Activated CD4-positive, alpha-beta T cell treated with anti-CD3 and anti-CD28 coated beads for 36 hours (primary cell): ENCODE measurements at regions of chr15 and their contacts with region 1.

Region 1: DNA sequence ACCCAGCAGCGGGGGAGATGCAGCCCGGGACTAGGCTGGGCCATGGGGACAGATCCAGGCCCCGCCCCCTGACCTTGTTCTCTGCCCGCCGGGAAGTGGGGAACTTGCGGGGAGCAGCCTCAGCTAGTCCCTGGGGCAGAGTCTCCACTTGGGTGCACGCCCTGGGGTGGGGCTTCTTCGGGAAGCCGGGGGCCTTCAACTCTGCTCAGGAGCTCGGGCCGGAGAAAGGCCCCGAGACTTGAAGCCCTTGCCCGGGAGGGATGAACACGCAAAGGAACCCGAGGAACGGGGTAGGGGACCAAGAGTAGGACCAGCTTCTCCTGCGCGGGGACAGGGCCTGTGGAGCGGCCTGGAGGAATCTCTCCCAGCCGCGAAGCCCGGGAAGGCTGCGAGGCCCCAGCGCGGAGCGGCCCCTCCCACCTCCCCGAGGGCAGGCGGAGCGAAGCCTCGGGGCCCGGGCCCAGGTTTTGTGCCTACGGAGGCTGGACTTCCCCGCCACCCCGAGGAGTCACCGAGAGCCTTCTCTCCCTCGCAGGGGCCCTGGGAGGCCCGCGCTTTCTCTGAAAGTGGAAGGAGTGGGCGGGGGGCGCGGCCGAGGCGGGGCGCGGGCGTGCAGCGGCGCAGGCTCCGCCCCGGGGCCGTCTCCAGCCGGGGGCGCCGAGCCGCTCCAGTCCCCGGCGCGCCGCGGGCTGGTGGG is at the start of gene ITPKA:
- DNase-seq: peak; percentile 97
- ATAC-seq: peak; percentile 85
- H3K4me3 Mint-ChIP-seq: peak within 1 kb of the TSS; percentile 58
- H3K27ac Mint-ChIP-seq: peak within 1 kb of the TSS; percentile 37
- H3K4me1 Mint-ChIP-seq: peaks cover 38% of the 10 kb centered on the region
- H3K27me3 Mint-ChIP-seq: peaks cover 40% of the 10 kb centered on the region
- total RNA-seq, gene ITPKA: 2.5 to 4.2 TPM

Region 2: DNA sequence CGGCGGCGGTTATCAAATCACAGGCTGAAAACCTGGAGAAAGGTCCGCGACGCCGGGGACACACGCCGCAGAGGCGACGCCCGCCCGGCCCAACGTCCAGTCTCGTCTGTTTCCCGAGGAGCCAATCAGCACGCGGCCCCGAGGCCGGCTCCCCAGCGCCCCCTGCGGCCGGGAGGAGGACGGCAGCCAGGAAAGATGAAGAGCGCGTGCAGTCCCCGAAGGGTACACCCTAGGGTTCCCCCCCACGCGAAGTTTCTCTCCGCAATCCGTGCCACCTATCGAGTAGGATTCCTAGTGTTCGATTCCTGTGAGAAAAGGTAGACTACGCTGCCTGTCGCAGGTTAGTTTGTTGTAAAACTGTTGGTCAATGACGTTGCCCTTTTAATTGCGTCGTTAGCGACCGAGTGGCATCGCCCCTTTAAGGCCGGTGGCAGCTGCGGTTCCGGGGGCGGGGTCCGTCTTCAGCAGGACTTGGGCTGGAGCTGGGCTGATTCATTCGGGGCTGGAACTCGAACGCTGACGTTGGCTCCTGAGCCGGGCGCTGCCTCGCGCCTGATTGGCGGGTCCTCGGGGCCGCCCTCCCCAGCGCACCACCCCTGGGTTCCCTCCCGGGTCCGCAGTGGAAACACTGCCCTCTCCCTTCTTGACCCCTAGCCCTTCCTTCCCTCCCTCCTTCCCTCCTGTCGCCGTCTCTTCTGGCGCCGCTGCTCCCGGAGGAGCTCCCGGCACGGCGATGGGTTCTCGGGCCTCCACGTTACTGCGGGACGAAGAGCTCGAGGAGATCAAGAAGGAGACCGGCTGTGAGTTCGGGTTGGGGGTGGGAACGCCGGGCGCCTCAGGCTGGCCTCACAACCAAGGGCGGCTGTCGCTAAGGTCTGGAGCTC is 262.5 kb before region 1 on chr15 and contains the starts of genes CHP1 and EXD1:
- CTCF ChIA-PET with region 1: no interaction called
- POLR2A ChIA-PET with region 1: no interaction called
- intact Hi-C with region 1: loop called in 1 of 2 experiments (anchors 1 kb)
- DNase-seq: peak; percentile 99
- ATAC-seq: peak; percentile 99
- H3K4me3 Mint-ChIP-seq: peak within 1 kb of the TSS; percentile 87
- H3K27ac Mint-ChIP-seq: peak within 1 kb of the TSS; percentile 86
- H3K4me1 Mint-ChIP-seq: peaks cover 29% of the 10 kb centered on the region
- H3K27me3 Mint-ChIP-seq: no peaks in the 10 kb centered on the region
- total RNA-seq, gene CHP1: 32.7 to 34.5 TPM
- total RNA-seq, gene EXD1: not detected

Region 3: GRCh38 chr15:41416742-41417406 is 76.5 kb before region 1 on chr15 and contains the start of gene RTF1:
- CTCF ChIA-PET with region 1: no interaction called
- POLR2A ChIA-PET with region 1: no interaction called
- intact Hi-C with region 1: loop called in 1 of 2 experiments (anchors 1 kb)
- DNase-seq: peak; percentile 98
- ATAC-seq: peak; percentile 94
- H3K4me3 Mint-ChIP-seq: peak within 1 kb of the TSS; percentile 88
- H3K27ac Mint-ChIP-seq: peak within 1 kb of the TSS; percentile 92
- H3K4me1 Mint-ChIP-seq: peaks cover 38% of the 10 kb centered on the region
- H3K27me3 Mint-ChIP-seq: no peaks in the 10 kb centered on the region
- total RNA-seq, gene RTF1: 29.4 to 32.3 TPM

Region 4: GRCh38 chr15:41557673-41558399 is 64.5 kb after region 1 on chr15:
- CTCF ChIA-PET with region 1: interaction called, 5 read pairs
- POLR2A ChIA-PET with region 1: interaction called, 3 read pairs
- intact Hi-C with region 1: loop called (anchors 1 to 2 kb)
- DNase-seq: peak; percentile 85
- ATAC-seq: peak; percentile 75
- H3K4me3 Mint-ChIP-seq: peak overlapping the region; percentile 69
- H3K27ac Mint-ChIP-seq: peak overlapping the region; percentile 45
- H3K4me1 Mint-ChIP-seq: peaks cover 20% of the 10 kb centered on the region
- H3K27me3 Mint-ChIP-seq: peaks cover 10% of the 10 kb centered on the region

Region 5: GRCh38 chr15:41695750-41696426 is 202.5 kb after region 1 on chr15:
- CTCF ChIA-PET with region 1: interaction called, 3 read pairs
- POLR2A ChIA-PET with region 1: no interaction called
- intact Hi-C with region 1: loop called in 1 of 2 experiments (anchors 5 kb)
- DNase-seq: peak; percentile 66
- ATAC-seq: peak; percentile 93
- H3K4me3 Mint-ChIP-seq: peak overlapping the region; percentile 2
- H3K27ac Mint-ChIP-seq: peak overlapping the region; percentile 78
- H3K4me1 Mint-ChIP-seq: peaks cover 43% of the 10 kb centered on the region
- H3K27me3 Mint-ChIP-seq: no peaks in the 10 kb centered on the region

Region 6: DNA sequence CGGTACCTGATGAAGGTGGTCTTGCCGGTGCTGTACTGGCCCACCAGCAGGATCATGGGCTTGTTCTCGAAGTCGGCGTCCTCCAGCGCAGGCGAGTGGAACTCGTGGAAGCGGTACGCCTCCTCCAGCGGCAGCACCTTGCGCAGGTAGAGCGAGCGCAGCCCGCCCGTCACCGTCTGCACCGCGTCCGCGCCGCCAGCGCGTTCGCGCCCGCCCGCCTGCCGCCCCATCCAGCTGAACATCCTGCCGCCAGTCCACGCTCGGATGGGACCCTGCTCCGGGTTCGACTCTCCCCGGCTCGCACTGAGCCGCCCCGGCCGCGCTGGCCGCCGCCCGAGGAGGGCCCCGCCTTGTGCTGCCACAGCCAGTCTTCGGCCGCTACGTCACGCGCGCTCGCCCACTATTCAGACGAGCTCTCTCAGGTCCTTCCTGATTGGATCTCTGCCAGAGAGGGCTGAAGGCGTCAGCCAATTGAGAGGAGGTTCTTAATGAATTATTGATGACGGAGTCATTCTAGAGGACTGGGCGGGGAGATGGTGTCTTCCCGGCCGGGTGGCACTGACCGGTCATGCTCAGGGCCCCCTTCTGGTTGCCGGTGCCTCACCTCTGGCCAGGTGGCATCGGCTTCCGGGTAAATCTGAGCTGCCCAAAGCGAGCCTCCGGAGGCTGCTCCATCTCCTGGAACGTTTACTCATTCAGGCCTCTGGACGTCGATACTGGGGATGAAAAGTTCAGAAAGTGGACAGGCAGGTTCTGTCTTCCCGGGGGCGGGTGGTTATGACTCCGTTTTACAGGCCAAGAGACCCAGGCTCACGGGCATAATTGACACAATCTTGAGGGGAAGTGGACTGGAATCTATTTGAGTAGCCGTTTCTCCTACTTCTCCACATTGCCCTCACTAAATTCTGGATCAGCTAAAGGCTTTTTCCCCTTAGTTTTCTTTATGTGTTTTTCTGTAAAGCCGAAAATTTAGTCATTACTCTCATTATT is 479.2 kb after region 1 on chr15 and contains the start of gene EHD4:
- CTCF ChIA-PET with region 1: no interaction called
- POLR2A ChIA-PET with region 1: no interaction called
- intact Hi-C with region 1: loop called in 1 of 2 experiments (anchors 1 kb)
- DNase-seq: peak; percentile 98
- ATAC-seq: peak; percentile 80
- H3K4me3 Mint-ChIP-seq: peak within 1 kb of the TSS; percentile 86
- H3K27ac Mint-ChIP-seq: peak within 1 kb of the TSS; percentile 94
- H3K4me1 Mint-ChIP-seq: peaks cover 53% of the 10 kb centered on the region
- H3K27me3 Mint-ChIP-seq: peaks cover 8% of the 10 kb centered on the region
- total RNA-seq, gene EHD4: 34.7 to 35.7 TPM

Region 7: GRCh38 chr15:42575188-42576039 is 1082.1 kb after region 1 on chr15 and contains the start of gene STARD9:
- CTCF ChIA-PET with region 1: no interaction called
- POLR2A ChIA-PET with region 1: no interaction called
- intact Hi-C with region 1: loop called in 1 of 2 experiments (anchors 5 kb)
- DNase-seq: peak; percentile 97
- ATAC-seq: peak; percentile 92
- H3K4me3 Mint-ChIP-seq: peak within 1 kb of the TSS; percentile 86
- H3K27ac Mint-ChIP-seq: peak within 1 kb of the TSS; percentile 76
- H3K4me1 Mint-ChIP-seq: peaks cover 18% of the 10 kb centered on the region
- H3K27me3 Mint-ChIP-seq: peaks cover 21% of the 10 kb centered on the region
- total RNA-seq, gene STARD9: 4.0 to 4.1 TPM